Activated T-helper 2 cell treated with anti-CD3 and anti-CD28 coated beads, Interferon-gamma antibody, Interleukin-2, Interleukin-4, amounts not matched to agents 10 μg/mL and 5 μg/mL and 100 μg/mL, durations not matched to agents 14 hours and 24 hours and 36 hours (primary cell): ENCODE measurements at regions of chr2 and their contacts with region 1.

Region 1: DNA sequence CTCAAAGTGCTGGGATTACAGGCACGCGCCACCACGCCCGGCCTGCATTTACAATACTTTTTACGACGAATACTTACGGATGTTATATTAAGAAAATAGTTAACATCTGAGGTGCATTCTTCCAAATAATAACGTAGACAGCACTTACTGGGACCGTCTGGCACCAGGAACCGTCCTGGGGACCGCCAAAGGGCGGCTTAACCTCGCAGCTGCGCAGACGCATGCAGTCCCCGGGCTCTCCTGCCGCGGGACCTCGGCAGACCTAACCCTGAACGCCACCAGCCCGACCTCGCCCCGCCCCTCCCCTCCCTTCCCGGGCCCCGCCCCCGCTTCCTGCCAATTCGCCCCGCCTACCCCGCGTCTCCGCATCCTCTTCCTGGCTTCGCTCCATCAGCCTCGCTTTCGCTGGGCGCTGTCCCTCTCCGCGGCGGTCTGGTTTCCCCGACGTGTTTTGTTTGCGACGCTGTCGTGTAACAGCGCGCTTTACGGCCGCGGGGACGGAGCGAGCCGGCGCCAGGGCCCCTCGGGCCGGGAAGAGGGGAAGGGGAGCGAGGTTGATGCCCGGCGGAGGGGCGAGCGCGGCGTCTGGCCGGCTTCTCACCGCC is at the start of gene CNOT11:
- DNase-seq: peak; percentile 98
- H3K4me3 Mint-ChIP-seq: peak within 1 kb of the TSS; percentile 96
- H3K27ac Mint-ChIP-seq: peak within 1 kb of the TSS; percentile 95
- H3K4me1 Mint-ChIP-seq: peaks cover 34% of the 10 kb centered on the region
- H3K27me3 Mint-ChIP-seq: no peaks in the 10 kb centered on the region
- total RNA-seq, gene CNOT11: 64.0 and 77.6 TPM in 2 replicates

Region 2: DNA sequence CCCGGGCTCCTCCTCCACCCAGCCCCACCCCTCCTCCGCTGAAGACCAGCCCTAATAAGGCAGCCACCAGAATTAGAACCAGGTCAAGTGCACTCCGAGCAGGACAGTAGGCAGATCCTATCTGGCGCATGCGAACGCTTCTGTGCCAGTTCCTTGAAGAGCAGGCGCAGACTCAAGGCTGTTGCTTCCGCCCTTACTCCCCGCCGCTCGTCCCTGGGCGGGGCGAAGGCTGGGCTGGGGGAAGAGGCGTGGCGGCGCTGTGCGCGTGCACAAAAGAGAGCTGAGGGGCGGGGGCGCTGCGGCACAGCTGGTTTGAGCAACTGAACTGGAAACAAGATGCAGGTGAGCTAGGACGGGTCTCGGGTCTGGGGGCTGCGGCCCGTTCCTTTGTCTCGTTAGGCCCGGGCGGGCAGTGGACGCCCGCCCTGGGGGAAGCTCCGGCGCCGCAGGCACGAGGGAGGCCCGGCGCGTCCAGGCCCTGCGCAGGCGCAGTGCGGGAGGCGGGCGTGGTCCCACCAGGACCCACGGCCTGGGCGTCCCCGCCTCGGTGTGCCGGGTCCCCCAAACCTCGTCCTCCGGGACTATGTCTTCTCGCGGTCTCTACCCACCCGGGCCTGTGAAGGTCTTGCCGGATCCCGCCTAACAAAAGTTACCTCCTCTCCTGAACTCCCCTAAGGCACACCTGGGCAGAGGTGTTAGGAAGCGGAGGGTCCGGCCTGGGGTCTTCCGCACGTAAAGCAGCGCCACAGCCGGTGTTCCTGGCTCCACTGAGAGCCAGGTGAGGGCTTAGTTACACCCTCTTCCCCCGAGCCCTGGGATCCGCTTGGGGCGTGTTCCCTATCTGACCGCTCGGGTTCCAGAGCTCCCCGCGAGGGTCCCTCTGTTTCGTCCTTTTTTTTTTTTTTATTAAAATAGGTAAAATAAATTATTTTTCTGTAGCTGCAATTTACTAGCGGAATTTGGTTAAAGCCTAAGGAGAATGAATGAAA is 689.5 kb before region 1 on chr2 and contains the start of gene PDCL3:
- intact Hi-C with region 1: loop called (anchors 2 kb)
- DNase-seq: peak; percentile 94
- H3K4me3 Mint-ChIP-seq: peak within 1 kb of the TSS; percentile 88
- H3K27ac Mint-ChIP-seq: peak within 1 kb of the TSS; percentile 99
- H3K4me1 Mint-ChIP-seq: peaks cover 36% of the 10 kb centered on the region
- H3K27me3 Mint-ChIP-seq: no peaks in the 10 kb centered on the region
- total RNA-seq, gene PDCL3: 42.5 and 48.8 TPM in 2 replicates

Region 3: DNA sequence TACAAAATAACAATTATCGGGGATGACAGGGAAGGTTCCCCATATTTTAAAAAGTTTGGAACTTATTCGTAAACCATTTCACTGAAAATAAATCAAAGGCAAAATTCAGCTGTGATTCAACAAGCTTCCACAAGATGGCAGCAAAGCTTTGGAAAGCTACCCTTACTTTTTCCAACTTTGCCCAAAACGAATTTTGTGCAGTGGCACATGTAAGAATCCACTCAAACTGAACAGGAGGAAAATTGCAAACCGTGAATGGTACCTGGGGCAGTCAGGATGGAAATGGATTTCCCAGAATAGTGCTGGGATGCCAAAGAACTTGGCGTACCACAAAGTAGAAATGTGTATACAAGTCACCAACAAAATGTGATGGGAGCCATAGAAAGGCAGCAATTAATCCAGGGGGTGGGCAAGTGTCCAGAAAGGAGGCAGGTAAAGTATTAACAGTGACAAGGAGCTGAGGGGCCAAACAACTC is 239.8 kb before region 1 on chr2:
- intact Hi-C with region 1: loop called (anchors 5 kb)
- DNase-seq: no peak
- H3K4me3 Mint-ChIP-seq: no peak overlapping the region
- H3K27ac Mint-ChIP-seq: peak overlapping the region; percentile 77
- H3K4me1 Mint-ChIP-seq: peaks cover 22% of the 10 kb centered on the region
- H3K27me3 Mint-ChIP-seq: no peaks in the 10 kb centered on the region

Region 4: GRCh38 chr2:101223814-101224231 is 28.7 kb before region 1 on chr2:
- intact Hi-C with region 1: no loop called
- DNase-seq: peak; percentile 55
- H3K4me3 Mint-ChIP-seq: no peak overlapping the region
- H3K27ac Mint-ChIP-seq: peak overlapping the region; percentile 21
- H3K4me1 Mint-ChIP-seq: peaks cover 15% of the 10 kb centered on the region
- H3K27me3 Mint-ChIP-seq: no peaks in the 10 kb centered on the region

Region 5: GRCh38 chr2:101272045-101272784 is 19.7 kb after region 1 on chr2:
- intact Hi-C with region 1: loop called (anchors 1 kb)
- DNase-seq: no peak
- H3K4me3 Mint-ChIP-seq: peak overlapping the region; percentile 30
- H3K27ac Mint-ChIP-seq: peak overlapping the region; percentile 52
- H3K4me1 Mint-ChIP-seq: peaks cover 39% of the 10 kb centered on the region
- H3K27me3 Mint-ChIP-seq: no peaks in the 10 kb centered on the region

Region 6: DNA sequence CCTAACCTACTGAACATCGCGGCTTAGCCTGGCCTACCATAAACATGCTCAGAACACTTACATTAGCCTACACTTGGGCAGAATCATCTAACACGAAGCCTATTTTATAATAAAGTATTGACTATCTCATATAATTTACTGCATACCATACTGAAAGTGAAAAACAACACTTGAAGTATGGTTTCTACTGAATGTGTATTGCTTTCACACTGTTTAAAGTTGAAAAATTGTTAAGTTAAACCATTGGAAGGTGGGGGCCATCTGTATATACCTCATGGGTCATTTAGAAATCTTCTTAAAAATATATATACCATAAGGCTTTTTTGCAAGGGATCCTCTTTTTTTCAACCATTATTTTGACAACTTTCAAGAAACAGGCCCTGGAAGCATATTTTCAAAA is 39.5 kb after region 1 on chr2:
- intact Hi-C with region 1: no loop called
- DNase-seq: no peak
- H3K4me3 Mint-ChIP-seq: no peak overlapping the region
- H3K27ac Mint-ChIP-seq: no peak overlapping the region
- H3K4me1 Mint-ChIP-seq: peaks cover 8% of the 10 kb centered on the region
- H3K27me3 Mint-ChIP-seq: no peaks in the 10 kb centered on the region

Region 7: GRCh38 chr2:101387151-101387807 is 134.8 kb after region 1 on chr2 and contains the start of gene CREG2:
- intact Hi-C with region 1: loop called (anchors 10 kb)
- DNase-seq: peak; percentile 56
- H3K4me3 Mint-ChIP-seq: peak within 1 kb of the TSS; percentile 66
- H3K27ac Mint-ChIP-seq: no peak within 1 kb of the TSS
- H3K4me1 Mint-ChIP-seq: no peaks in the 10 kb centered on the region
- H3K27me3 Mint-ChIP-seq: peaks cover 64% of the 10 kb centered on the region
- total RNA-seq, gene CREG2: not detected in 2 replicates